Psoas muscle (tissue), 8 donors: ENCODE measurements at regions of chr19 and their contacts with region 1.

Region 1: GRCh38 chr19:3125900-3126524 is 9.8 kb upstream of the GNA15 start:
- DNase-seq: peak; percentile 63 to 83
- ATAC-seq: peak; percentile 77 to 83 (median 80)
- H3K4me3 ChIP-seq: no peak overlapping the region
- H3K27ac ChIP-seq: no peak overlapping the region
- H3K4me1 ChIP-seq: no peaks in the 10 kb centered on the region
- H3K27me3 ChIP-seq: no peaks in the 10 kb centered on the region
- CTCF ChIP-seq: peak; percentile 68

Region 2: GRCh38 chr19:3075895-3076431 is 50.0 kb before region 1 on chr19:
- intact Hi-C with region 1: loop called in 1 of 2 experiments (anchors 10 kb)
- DNase-seq: peak; percentile 53 to 79
- ATAC-seq: peak; percentile 66 to 80 (median 70)
- H3K4me3 ChIP-seq: no peak overlapping the region
- H3K27ac ChIP-seq: no peak overlapping the region
- H3K4me1 ChIP-seq: peaks cover 11% of the 10 kb centered on the region
- H3K27me3 ChIP-seq: no peaks in the 10 kb centered on the region
- CTCF ChIP-seq: peak; percentile 89